ENCODE measurements at regions of chrX and their contacts with region 1.

Region 1: GRCh38 chrX:137926090-137926489 is 360.2 kb downstream of the ZIC3 start:
- DNase-seq: peak; percentile 30
- H3K4me3 Mint-ChIP-seq: no peak overlapping the region
- H3K27ac Mint-ChIP-seq: no peak overlapping the region
- H3K4me1 Mint-ChIP-seq: no peaks in the 10 kb centered on the region
- H3K27me3 Mint-ChIP-seq: no peaks in the 10 kb centered on the region
- CTCF ChIP-seq: peak; percentile 31

Region 2: DNA sequence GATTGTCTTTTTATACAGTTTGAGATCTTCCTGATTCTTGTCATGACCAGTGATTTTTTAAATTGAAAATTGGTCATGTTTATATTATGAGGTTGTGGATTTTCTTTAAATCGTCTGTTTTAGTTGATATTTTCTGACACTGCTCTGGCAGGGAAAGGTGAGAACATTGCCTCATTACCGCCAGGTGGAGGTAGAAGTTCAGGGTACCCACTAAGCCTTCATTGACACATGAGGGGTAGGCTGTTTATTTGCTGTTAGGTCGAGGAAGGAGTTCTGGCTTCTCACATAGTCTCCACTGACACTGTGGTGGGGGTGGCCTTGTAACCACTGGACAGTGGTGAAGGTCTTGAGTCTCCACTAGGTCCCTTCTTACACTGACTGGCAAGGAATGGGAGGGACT is 774.7 kb before region 1 on chrX:
- CTCF ChIA-PET with region 1: no interaction called
- POLR2A ChIA-PET with region 1: no interaction called
- intact Hi-C with region 1: loop called (anchors 5 kb)
- DNase-seq: no peak
- H3K4me3 Mint-ChIP-seq: no peak overlapping the region
- H3K27ac Mint-ChIP-seq: no peak overlapping the region
- H3K4me1 Mint-ChIP-seq: no peaks in the 10 kb centered on the region
- H3K27me3 Mint-ChIP-seq: peaks cover 49% of the 10 kb centered on the region
- CTCF ChIP-seq: peak; percentile 15

Region 3: GRCh38 chrX:137432608-137433007 is 493.5 kb before region 1 on chrX:
- CTCF ChIA-PET with region 1: interaction called, 52 read pairs
- POLR2A ChIA-PET with region 1: no interaction called
- intact Hi-C with region 1: loop called (anchors 1 kb)
- DNase-seq: peak; percentile 14
- H3K4me3 Mint-ChIP-seq: no peak overlapping the region
- H3K27ac Mint-ChIP-seq: no peak overlapping the region
- H3K4me1 Mint-ChIP-seq: no peaks in the 10 kb centered on the region
- H3K27me3 Mint-ChIP-seq: no peaks in the 10 kb centered on the region
- CTCF ChIP-seq: peak; percentile 30

Region 4: DNA sequence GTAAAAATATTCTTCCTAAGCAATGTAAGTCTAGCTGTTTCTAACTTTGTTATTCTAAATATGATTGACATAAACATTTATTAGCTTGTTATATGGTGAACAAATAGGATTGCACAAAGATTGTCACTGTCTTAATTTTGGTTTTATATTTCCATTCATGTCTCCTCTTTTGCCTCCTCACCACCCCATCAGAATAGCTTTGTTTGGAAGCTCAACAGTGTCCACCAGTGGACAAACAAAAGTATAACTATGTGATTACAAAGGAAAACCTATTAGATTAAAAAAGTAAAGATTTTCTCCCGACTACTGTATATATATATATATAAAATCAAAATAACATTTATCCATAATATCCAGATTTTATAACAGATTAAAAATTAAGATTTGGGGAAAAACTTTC is 108.0 kb after region 1 on chrX:
- CTCF ChIA-PET with region 1: no interaction called
- POLR2A ChIA-PET with region 1: no interaction called
- intact Hi-C with region 1: no loop called
- DNase-seq: peak; percentile 18
- H3K4me3 Mint-ChIP-seq: no peak overlapping the region
- H3K27ac Mint-ChIP-seq: no peak overlapping the region
- H3K4me1 Mint-ChIP-seq: no peaks in the 10 kb centered on the region
- H3K27me3 Mint-ChIP-seq: no peaks in the 10 kb centered on the region
- CTCF ChIP-seq: no peak